ENCODE measurements at regions of chr2 and their contacts with region 1.

Region 1: DNA sequence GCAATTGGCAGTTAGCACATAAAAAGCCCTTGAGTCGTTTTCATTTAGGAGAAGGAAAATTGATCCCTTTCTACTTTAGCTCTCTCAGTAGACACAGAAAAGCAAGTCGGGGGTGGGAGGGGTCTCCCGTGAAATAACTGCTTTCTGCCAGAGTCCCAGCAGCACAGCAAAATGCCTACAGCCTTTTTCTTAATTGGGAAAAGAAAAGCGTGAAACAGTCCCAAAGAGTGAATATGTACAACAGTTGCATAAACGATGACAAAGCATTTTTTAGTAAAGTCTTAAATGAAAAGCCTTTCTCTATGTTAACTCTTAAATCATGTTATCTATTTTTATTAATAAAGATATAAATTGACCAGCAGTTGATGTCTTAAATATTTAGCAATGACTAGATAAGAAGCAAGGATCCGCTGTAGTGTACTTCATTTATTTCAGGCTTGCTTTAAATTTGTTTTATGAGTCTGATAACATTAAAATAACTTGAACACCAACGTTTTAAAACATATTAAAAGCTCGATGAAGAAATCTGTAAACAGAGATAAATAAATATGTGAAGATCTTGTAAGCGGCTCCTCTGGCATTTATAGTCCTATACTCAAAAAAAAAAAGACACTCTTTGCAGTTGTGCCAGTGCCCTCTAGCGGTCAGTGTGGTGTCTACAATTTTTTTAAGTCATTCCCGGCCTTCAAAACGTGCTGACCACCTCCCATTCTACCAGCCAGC is 42.3 kb upstream of the ATIC start:
- DNase-seq: peak; percentile 80
- H3K4me3 ChIP-seq: peak overlapping the region; percentile 53
- H3K27ac ChIP-seq: no peak overlapping the region
- H3K4me1 ChIP-seq: no peaks in the 10 kb centered on the region
- H3K27me3 ChIP-seq: no peaks in the 10 kb centered on the region

Region 2: DNA sequence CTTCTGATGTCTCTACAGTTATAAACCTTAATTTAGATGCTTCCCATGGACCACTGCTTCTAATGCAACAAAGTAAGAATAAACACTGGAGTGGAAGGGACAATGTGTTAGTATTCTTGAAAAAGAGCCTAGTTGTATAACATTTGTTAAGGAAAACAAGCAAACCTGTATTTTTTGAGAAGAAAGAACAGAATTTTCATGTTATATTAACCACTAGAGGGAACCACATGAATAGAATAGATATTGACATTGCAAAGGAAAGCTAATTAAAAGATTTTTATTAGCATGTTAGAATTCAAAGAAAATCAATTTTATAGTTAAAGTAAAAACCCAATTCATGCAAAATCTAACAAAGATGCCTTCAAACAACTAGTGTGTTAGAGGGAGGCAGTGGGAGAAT is 308.9 kb before region 1 on chr2:
- in situ Hi-C with region 1: loop called (anchors 10 kb)
- DNase-seq: peak; percentile 40
- H3K4me3 ChIP-seq: no peak overlapping the region
- H3K27ac ChIP-seq: no peak overlapping the region
- H3K4me1 ChIP-seq: no peaks in the 10 kb centered on the region
- H3K27me3 ChIP-seq: no peaks in the 10 kb centered on the region